ENCODE measurements at regions of chr1 and their contacts with region 1.

Region 1: DNA sequence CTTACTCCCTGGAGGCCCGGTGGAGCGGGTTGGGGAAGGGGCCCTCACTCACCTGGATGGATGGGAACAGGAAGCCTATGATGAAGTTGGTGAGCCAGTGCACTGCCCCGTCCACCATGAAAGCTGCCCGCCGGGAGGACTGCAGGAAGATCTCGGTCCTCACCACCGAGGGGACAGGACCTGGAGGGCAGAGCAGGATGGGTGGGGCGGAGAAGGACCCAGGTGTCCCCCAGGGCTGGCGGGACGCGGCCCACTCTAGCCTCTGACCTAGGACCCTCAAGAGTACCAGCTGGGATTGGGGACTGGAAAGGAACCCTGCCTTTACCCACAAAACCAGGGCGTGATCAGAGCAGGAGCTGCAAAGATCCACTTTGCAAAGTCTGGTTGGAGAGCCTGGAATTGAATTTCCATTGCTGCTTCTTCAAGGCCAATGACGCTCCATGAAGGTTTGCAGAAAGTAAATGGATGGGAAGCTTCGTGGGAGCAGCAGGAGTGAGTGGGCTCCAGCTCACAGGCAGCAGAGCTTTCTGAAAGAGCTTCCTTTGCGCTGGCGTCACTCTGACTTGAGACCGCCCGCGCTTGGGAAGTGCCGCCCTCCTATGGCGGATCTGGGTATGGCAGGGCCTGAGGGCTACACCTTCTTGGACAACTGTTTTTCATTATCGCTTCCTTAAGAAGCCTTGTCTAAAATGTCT is 21.4 kb downstream of the SLC2A7 start:
- DNase-seq: peak; percentile 94

Region 2: DNA sequence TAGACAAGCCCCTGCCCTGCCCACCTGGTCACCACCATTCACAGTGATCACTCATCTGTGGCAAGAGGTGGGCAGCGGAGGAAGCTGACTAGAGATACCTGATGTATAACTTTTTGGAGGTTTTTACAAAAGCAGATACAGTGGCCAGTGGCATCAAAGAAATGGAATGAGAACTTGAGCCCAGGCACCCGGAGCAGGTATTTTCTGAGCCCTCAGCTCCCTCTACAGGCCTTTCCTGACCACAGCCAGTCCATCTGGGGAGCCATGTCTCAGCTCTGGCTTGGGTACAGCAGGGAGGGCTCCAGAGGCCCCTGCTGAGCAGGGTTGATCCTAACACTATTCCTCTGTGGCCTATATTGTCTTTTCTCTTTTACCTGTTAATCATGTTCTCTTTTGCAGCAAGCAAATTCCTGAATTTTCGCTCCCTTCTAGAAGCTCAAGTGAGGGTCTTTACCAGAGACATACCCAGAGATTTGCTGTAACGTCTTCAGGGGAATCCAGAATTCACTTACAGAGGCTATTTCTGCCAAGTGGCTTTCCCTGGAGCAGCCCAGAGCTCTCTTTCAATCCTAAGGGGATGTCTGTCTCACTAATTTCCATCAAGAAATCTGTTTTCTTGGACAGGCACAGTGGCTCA is 96.8 kb after region 1 on chr1:
- intact Hi-C with region 1: loop called (anchors 2 to 5 kb)
- DNase-seq: no peak

Measured in posterior vena cava (tissue), 2 donors.